ENCODE measurements at regions of chr10 and their contacts with region 1.

Region 1: GRCh38 chr10:22849077-22849805 is 78.6 kb upstream of the ARMC3 start:
- DNase-seq: peak; percentile 95

Region 2: DNA sequence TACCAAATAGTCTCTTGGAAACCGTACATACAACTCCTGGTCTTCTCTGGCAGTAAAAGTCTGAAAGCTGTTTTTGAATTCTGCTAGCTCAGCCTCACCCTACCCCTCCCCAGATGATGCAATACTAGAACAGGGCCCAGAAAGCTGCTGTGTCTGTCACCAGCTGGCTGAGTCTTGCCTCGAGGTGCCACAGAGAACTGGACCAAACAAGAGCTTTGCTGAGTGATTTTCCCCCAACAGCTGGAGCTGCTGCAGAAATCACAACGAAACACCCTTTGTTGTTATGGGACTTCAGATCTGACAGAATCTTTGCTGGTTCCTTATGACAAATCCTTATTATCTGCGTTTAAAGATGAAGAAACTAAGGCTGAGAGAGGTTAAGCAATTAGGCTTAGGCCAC is 369.8 kb before region 1 on chr10:
- intact Hi-C with region 1: no loop called
- DNase-seq: no peak

Region 3: GRCh38 chr10:22831586-22831985 is 17.7 kb before region 1 on chr10:
- intact Hi-C with region 1: loop called in 1 of 2 experiments (anchors 2 kb)
- DNase-seq: no peak

Region 4: GRCh38 chr10:22894714-22895113 is 45.5 kb after region 1 on chr10:
- intact Hi-C with region 1: no loop called
- DNase-seq: no peak

Region 5: GRCh38 chr10:23613900-23614299 is 764.7 kb after region 1 on chr10:
- intact Hi-C with region 1: no loop called
- DNase-seq: no peak

Region 6: GRCh38 chr10:24432472-24433416 is 1583.5 kb after region 1 on chr10:
- intact Hi-C with region 1: loop called in 1 of 2 experiments (anchors 10 kb)
- DNase-seq: no peak

Measured in posterior vena cava (tissue), 2 donors.